IMR-90 (cell line): ENCODE measurements at regions of chr5 and their contacts with region 1.

Region 1: GRCh38 chr5:146049014-146049703 is 56.2 kb downstream of the PLAC8L1 start:
- DNase-seq: peak; percentile 84
- ATAC-seq: peak; percentile 92
- H3K4me3 ChIP-seq: no peak overlapping the region
- H3K27ac ChIP-seq: no peak overlapping the region
- H3K4me1 ChIP-seq: no peaks in the 10 kb centered on the region
- H3K27me3 ChIP-seq: no peaks in the 10 kb centered on the region
- CTCF ChIP-seq: peak; percentile 88
- POLR2A ChIP-seq: 0 out of 2 replicates have a peak, but pooled peaks have one; percentile 64
- RAD21 ChIP-seq: peak; percentile 96

Region 2: GRCh38 chr5:145681686-145682085 is 367.5 kb before region 1 on chr5:
- CTCF ChIA-PET with region 1: no interaction called
- POLR2A ChIA-PET with region 1: no interaction called
- dilution Hi-C with region 1: no loop called
- in situ Hi-C with region 1: loop called (anchors 10 kb)
- intact Hi-C with region 1: loop called (anchors 1 kb)
- DNase-seq: peak; percentile 73
- ATAC-seq: peak; percentile 85
- H3K4me3 ChIP-seq: no peak overlapping the region
- H3K27ac ChIP-seq: no peak overlapping the region
- H3K4me1 ChIP-seq: no peaks in the 10 kb centered on the region
- H3K27me3 ChIP-seq: no peaks in the 10 kb centered on the region
- CTCF ChIP-seq: peak; percentile 67
- POLR2A ChIP-seq: no peak
- RAD21 ChIP-seq: peak; percentile 64

Region 3: DNA sequence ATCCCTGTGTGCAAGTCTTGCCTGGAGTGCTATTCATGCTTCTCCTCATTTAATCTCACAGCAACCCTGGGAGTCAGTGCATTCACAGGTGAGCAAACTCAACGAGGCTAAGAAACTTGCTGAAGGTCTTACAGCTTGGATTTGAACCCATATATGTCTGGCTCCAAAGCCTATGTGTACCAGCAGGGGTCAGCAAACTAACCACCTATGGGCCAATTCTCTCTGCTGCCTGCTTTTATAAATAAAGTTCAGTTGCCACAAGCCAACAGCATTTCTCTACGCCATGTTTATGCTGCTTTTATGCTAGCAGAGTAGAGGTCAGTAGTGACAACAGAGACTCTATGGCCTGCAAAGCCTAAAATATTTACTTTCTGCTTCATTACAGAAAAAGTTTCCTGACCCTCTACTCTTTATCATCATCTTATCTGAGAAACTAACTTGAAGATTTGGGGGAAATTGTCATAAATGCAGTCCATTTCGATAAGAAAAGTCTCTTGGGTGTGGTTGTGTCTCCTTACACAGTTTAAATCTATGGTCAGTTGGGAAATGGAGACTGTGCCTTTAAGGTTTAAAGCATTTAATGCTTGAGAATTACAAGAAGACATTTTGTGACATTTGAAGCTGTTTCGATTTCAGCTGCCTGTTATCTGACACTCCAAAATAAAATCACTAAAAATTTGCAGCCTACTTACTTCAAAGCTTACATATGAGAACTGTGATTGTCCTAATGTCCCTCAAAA is 351.7 kb before region 1 on chr5:
- CTCF ChIA-PET with region 1: no interaction called
- POLR2A ChIA-PET with region 1: no interaction called
- dilution Hi-C with region 1: no loop called
- in situ Hi-C with region 1: no loop called
- intact Hi-C with region 1: loop called (anchors 5 kb)
- DNase-seq: peak; percentile 49
- ATAC-seq: peak; percentile 73
- H3K4me3 ChIP-seq: no peak overlapping the region
- H3K27ac ChIP-seq: no peak overlapping the region
- H3K4me1 ChIP-seq: no peaks in the 10 kb centered on the region
- H3K27me3 ChIP-seq: no peaks in the 10 kb centered on the region
- CTCF ChIP-seq: peak; percentile 47
- POLR2A ChIP-seq: no peak
- RAD21 ChIP-seq: peak; percentile 53

Region 4: DNA sequence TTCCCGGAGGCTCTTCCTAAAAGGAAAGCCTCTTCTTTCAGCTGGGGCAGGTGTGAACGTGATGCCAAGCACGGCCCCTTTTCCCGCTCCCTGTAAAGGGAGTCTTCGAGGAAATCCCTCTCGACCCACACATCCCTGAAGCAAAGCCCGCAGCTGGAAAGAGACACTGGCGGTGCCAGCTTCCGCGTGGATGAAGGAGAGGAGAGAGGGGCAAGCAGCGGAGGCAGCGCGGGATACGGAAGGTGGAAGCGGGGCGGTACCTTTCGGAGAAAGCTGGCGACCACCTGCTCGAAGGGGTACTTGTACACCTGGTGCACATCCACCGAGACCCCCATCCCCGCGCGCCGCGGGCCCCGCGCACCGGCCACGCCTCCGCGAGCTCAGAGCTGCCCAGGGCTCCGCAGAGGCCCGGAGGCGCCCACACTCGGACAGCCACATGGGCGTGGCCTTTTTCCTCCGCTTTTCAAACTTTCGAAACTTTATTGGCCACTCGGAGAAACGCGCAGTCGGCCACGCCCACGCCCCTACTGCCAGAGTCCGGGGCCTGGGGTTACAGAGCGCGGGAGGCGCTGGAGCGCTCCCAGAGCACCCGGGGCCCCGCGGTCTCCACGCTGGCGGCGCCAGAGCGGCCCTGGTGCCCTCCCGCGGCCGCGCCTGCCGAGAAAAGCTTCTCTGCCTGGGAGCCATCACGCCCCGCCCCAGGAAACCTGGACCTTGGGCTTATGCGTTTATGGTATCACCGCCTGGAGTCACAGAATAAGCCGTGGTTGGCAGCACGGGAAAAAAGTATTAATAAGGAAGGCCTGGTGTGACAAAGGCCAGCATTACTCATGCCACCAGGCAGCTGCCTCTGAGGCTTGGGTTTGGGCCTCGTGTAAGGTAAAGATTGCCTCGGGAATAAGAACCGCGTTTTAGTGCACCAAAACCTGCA is 214.0 kb before region 1 on chr5 and contains the start of gene PRELID2:
- CTCF ChIA-PET with region 1: no interaction called
- POLR2A ChIA-PET with region 1: no interaction called
- dilution Hi-C with region 1: no loop called
- in situ Hi-C with region 1: loop called (anchors 10 kb)
- intact Hi-C with region 1: loop called (anchors 1 kb)
- DNase-seq: peak; percentile 84
- ATAC-seq: peak; percentile 91
- H3K4me3 ChIP-seq: peak within 1 kb of the TSS; percentile 60
- H3K27ac ChIP-seq: peak within 1 kb of the TSS; percentile 13
- H3K4me1 ChIP-seq: peaks cover 5% of the 10 kb centered on the region
- H3K27me3 ChIP-seq: no peaks in the 10 kb centered on the region
- CTCF ChIP-seq: 0 out of 2 replicates have a peak, but pooled peaks have one; percentile 3
- POLR2A ChIP-seq: peak; percentile 52; the same call in 1 of the 2 replicates
- RAD21 ChIP-seq: peak; percentile 7; the same call in 1 of the 2 replicates
- total RNA-seq, gene PRELID2: 8.6 and 13.9 TPM in 2 replicates

Region 5: DNA sequence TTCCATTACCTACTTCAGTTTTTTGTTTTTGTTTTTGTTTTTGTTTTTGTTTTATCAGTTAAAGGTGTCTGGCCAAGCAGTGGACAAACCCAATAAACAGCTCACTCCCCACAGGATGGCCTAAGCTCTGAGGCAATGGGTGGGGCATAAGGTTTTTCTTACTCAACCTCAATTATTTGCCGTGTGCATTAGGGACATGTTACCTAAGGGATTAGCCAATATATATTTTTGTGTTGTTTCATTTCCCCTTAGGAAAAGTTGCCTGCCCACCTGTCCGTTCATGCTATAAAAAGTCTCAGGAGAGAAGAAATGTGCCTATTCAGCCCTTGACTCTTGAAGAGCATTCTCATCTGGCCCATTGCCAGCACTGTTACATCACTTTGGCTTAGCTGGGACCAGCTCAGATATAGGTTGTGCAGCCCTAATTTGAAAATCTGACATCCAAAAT is 105.5 kb before region 1 on chr5:
- CTCF ChIA-PET with region 1: no interaction called
- POLR2A ChIA-PET with region 1: no interaction called
- dilution Hi-C with region 1: no loop called
- in situ Hi-C with region 1: no loop called
- intact Hi-C with region 1: loop called (anchors 5 kb)
- DNase-seq: peak; percentile 25
- ATAC-seq: no peak
- H3K4me3 ChIP-seq: no peak overlapping the region
- H3K27ac ChIP-seq: no peak overlapping the region
- H3K4me1 ChIP-seq: peaks cover 5% of the 10 kb centered on the region; the same call in 1 of the 2 replicates
- H3K27me3 ChIP-seq: peaks cover 2% of the 10 kb centered on the region; the same call in 1 of the 2 replicates
- CTCF ChIP-seq: no peak
- POLR2A ChIP-seq: no peak
- RAD21 ChIP-seq: no peak